ENCODE measurements at regions of chr20 and their contacts with region 1.

Region 1: GRCh38 chr20:50575847-50576720 is 65.9 kb downstream of the PTPN1 start:
- DNase-seq: peak; percentile 46 to 79 (median 62)
- ATAC-seq: peak; percentile 86
- H3K4me3 ChIP-seq: no peak overlapping the region
- H3K4me3 Mint-ChIP-seq: no peak overlapping the region
- H3K27ac ChIP-seq: no peak overlapping the region
- H3K27ac Mint-ChIP-seq: peak overlapping the region; percentile 47
- H3K4me1 ChIP-seq: peaks cover 7% of the 10 kb centered on the region
- H3K4me1 Mint-ChIP-seq: peaks cover 42% of the 10 kb centered on the region
- H3K27me3 ChIP-seq: no peaks in the 10 kb centered on the region
- H3K27me3 Mint-ChIP-seq: no peaks in the 10 kb centered on the region
- CTCF ChIP-seq: peak; percentile 68

Region 2: DNA sequence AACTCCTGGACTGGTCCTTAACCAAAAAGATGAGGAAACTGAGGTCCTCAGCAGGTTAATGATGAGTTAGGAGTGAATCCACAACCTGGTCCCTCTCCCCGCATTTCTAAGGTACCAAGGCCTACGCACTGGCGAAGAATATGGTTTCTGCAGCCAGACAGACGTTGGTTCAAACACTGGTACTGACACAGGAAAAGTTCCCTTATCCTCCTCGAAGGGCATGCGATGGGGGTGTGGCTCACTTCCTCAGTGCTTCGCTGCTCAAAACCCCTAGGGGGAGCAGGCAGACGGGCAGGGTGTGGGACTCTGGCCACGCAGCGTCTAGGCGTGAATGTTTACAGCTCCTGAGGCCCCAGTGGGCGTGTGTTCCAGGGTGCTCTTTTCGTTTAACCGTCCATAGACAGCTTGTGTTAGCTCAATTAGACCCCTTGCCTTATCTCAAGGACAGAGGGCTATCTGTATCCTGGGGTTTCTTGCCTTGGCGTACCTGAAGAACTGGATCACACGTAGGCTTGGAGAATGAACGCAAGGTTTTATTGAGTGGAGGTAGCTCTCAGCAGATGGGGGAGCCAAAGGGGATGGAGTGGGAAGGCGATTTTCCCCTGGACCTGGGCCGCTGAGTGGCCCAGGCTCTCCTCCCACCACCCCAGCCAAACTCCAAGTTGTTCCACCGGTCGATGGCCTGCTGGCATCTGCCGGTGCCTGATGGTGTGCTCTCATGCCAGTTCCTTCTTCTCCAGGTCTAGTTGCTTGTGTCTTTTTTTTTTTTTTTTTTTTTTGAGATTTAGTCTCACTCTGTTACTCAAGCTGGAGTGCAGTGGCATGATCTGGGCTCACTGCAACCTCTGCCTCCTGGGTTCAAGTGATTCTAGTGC is 97.7 kb before region 1 on chr20:
- CTCF ChIA-PET with region 1: interaction called, 6 read pairs
- POLR2A ChIA-PET with region 1: interaction called, 3 read pairs
- intact Hi-C with region 1: loop called (anchors 1 kb)
- DNase-seq: peak; percentile 61 to 88 (median 70)
- ATAC-seq: peak; percentile 100
- H3K4me3 ChIP-seq: no peak overlapping the region
- H3K4me3 Mint-ChIP-seq: no peak overlapping the region
- H3K27ac ChIP-seq: no peak overlapping the region
- H3K27ac Mint-ChIP-seq: no peak overlapping the region
- H3K4me1 ChIP-seq: peaks cover 18% of the 10 kb centered on the region
- H3K4me1 Mint-ChIP-seq: peaks cover 21% of the 10 kb centered on the region
- H3K27me3 ChIP-seq: no peaks in the 10 kb centered on the region
- H3K27me3 Mint-ChIP-seq: no peaks in the 10 kb centered on the region
- CTCF ChIP-seq: peak; percentile 82

Region 3: GRCh38 chr20:50504231-50504823 is 71.8 kb before region 1 on chr20:
- CTCF ChIA-PET with region 1: interaction called, 8 read pairs
- POLR2A ChIA-PET with region 1: no interaction called
- intact Hi-C with region 1: loop called in 1 of 2 experiments (anchors 2 kb)
- DNase-seq: peak in 3 of 14 experiments; percentile 41 to 49 (median 46)
- ATAC-seq: no peak
- H3K4me3 ChIP-seq: no peak overlapping the region
- H3K4me3 Mint-ChIP-seq: no peak overlapping the region
- H3K27ac ChIP-seq: no peak overlapping the region
- H3K27ac Mint-ChIP-seq: no peak overlapping the region
- H3K4me1 ChIP-seq: peaks cover 6% of the 10 kb centered on the region
- H3K4me1 Mint-ChIP-seq: peaks cover 11% of the 10 kb centered on the region
- H3K27me3 ChIP-seq: no peaks in the 10 kb centered on the region
- H3K27me3 Mint-ChIP-seq: no peaks in the 10 kb centered on the region
- CTCF ChIP-seq: no peak

Region 4: GRCh38 chr20:50610221-50610620 is 34.1 kb after region 1 on chr20:
- CTCF ChIA-PET with region 1: no interaction called
- POLR2A ChIA-PET with region 1: no interaction called
- intact Hi-C with region 1: no loop called
- DNase-seq: no peak
- ATAC-seq: no peak
- H3K4me3 ChIP-seq: no peak overlapping the region
- H3K4me3 Mint-ChIP-seq: no peak overlapping the region
- H3K27ac ChIP-seq: no peak overlapping the region
- H3K27ac Mint-ChIP-seq: no peak overlapping the region
- H3K4me1 ChIP-seq: no peaks in the 10 kb centered on the region
- H3K4me1 Mint-ChIP-seq: no peaks in the 10 kb centered on the region
- H3K27me3 ChIP-seq: peaks cover 0 to 3% of the 10 kb centered on the region in 2 experiments
- H3K27me3 Mint-ChIP-seq: no peaks in the 10 kb centered on the region
- CTCF ChIP-seq: no peak

Measured in CD4-positive, alpha-beta T cell (primary cell).